Endothelial cell of umbilical vein (primary cell): ENCODE measurements at regions of chr2 and their contacts with region 1.

Region 1: GRCh38 chr2:198628596-198628995 is 824.2 kb downstream of the PLCL1 start:
- DNase-seq: no peak
- H3K4me3 ChIP-seq: no peak overlapping the region
- H3K27ac ChIP-seq: no peak overlapping the region
- H3K4me1 ChIP-seq: no peaks in the 10 kb centered on the region
- H3K27me3 ChIP-seq: no peaks in the 10 kb centered on the region
- CTCF ChIP-seq: no peak
- POLR2A ChIP-seq: no peak

Region 2: DNA sequence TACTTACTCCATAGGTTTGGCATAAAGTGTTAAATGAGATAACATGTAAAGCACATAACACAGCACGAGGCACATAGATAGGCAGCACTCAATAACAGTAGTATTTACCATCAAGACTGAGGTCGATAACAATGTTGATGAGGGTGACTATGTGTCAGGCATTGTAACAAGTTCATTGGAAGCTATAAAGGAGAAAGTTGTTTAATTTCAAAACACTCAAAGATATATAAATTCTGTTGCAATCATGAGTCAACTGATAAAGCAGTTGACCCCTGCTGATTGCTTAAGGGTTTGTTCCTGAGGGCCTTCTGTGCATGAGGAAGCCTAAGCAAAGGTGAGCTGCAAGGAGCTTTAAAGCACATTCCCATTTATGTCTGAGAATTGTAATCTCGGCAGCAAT is 68.6 kb after region 1 on chr2:
- CTCF ChIA-PET with region 1: no interaction called
- POLR2A ChIA-PET with region 1: no interaction called
- dilution Hi-C with region 1: no loop called
- intact Hi-C with region 1: loop called (anchors 10 kb)
- DNase-seq: no peak
- H3K4me3 ChIP-seq: no peak overlapping the region
- H3K27ac ChIP-seq: no peak overlapping the region
- H3K4me1 ChIP-seq: no peaks in the 10 kb centered on the region
- H3K27me3 ChIP-seq: no peaks in the 10 kb centered on the region
- CTCF ChIP-seq: no peak
- POLR2A ChIP-seq: no peak